Activated CD4-positive, alpha-beta T cell treated with anti-CD3 and anti-CD28 coated beads for 36 hours (primary cell): ENCODE measurements at regions of chr2 and their contacts with region 1.

Region 1: GRCh38 chr2:36878429-36878828 is 87.9 kb downstream of the STRN start:
- DNase-seq: no peak
- ATAC-seq: no peak
- H3K4me3 Mint-ChIP-seq: no peak overlapping the region
- H3K27ac Mint-ChIP-seq: no peak overlapping the region
- H3K4me1 Mint-ChIP-seq: no peaks in the 10 kb centered on the region
- H3K27me3 Mint-ChIP-seq: no peaks in the 10 kb centered on the region

Region 2: DNA sequence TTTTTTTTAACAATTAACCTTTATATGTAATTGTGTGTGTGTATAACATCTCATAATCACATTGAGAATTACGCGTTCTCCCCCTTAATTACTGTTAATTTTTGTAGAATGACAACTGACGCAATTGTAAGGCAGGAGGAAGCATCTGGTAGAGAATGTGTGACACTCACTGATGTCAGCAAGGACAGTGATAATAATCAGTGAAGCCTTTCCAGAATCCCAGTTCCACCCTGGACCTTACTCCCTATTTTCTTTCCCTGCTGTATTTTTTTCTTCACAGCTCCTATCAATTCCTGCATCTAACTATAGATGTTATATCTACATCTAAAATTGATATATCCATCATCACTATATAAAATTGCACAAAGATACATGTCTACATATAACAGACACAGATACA is 104.0 kb after region 1 on chr2:
- CTCF ChIA-PET with region 1: no interaction called
- POLR2A ChIA-PET with region 1: interaction called, 12 read pairs
- intact Hi-C with region 1: no loop called
- DNase-seq: no peak
- ATAC-seq: no peak
- H3K4me3 Mint-ChIP-seq: no peak overlapping the region
- H3K27ac Mint-ChIP-seq: no peak overlapping the region
- H3K4me1 Mint-ChIP-seq: no peaks in the 10 kb centered on the region
- H3K27me3 Mint-ChIP-seq: no peaks in the 10 kb centered on the region